PC-9 (cell line): ENCODE measurements at regions of chr3 and their contacts with region 1.

Region 1: DNA sequence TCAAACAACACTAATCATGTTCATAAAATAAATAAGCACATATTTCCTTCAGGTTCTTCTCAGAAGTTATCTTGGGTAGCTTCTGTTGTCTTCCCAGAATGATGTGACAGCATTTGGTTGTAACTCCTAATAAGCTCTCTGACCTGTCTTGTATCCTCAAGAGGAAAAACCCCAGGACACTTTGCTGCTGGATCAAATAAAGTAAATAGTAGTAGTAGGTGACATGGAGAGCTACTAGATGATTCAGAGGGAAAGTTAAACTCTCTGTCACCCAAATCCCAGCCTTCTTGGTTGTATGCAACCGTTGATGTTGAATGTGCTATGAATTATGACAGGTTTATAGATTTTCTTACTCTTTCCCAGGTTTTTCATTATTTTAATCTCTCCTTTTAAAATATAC is 143.0 kb downstream of the ARPP21 start:
- DNase-seq: no peak
- H3K4me3 ChIP-seq: no peak overlapping the region
- H3K27ac ChIP-seq: no peak overlapping the region
- H3K4me1 ChIP-seq: no peaks in the 10 kb centered on the region
- H3K27me3 ChIP-seq: peaks cover 5% of the 10 kb centered on the region; the same call in 1 of the 2 replicates
- CTCF ChIP-seq: no peak

Region 2: GRCh38 chr3:35194666-35195065 is 587.7 kb before region 1 on chr3:
- CTCF ChIA-PET with region 1: no interaction called
- POLR2A ChIA-PET with region 1: no interaction called
- intact Hi-C with region 1: no loop called
- DNase-seq: no peak
- H3K4me3 ChIP-seq: no peak overlapping the region
- H3K27ac ChIP-seq: no peak overlapping the region
- H3K4me1 ChIP-seq: no peaks in the 10 kb centered on the region
- H3K27me3 ChIP-seq: no peaks in the 10 kb centered on the region
- CTCF ChIP-seq: no peak

Region 3: GRCh38 chr3:35505181-35505580 is 277.2 kb before region 1 on chr3:
- CTCF ChIA-PET with region 1: no interaction called
- POLR2A ChIA-PET with region 1: no interaction called
- intact Hi-C with region 1: no loop called
- DNase-seq: no peak
- H3K4me3 ChIP-seq: no peak overlapping the region
- H3K27ac ChIP-seq: no peak overlapping the region
- H3K4me1 ChIP-seq: no peaks in the 10 kb centered on the region
- H3K27me3 ChIP-seq: no peaks in the 10 kb centered on the region
- CTCF ChIP-seq: no peak

Region 4: GRCh38 chr3:35680866-35681650 is 101.3 kb before region 1 on chr3:
- CTCF ChIA-PET with region 1: no interaction called
- POLR2A ChIA-PET with region 1: no interaction called
- intact Hi-C with region 1: no loop called
- DNase-seq: no peak
- H3K4me3 ChIP-seq: no peak overlapping the region
- H3K27ac ChIP-seq: no peak overlapping the region
- H3K4me1 ChIP-seq: no peaks in the 10 kb centered on the region
- H3K27me3 ChIP-seq: peaks cover 35% of the 10 kb centered on the region
- CTCF ChIP-seq: no peak

Region 5: DNA sequence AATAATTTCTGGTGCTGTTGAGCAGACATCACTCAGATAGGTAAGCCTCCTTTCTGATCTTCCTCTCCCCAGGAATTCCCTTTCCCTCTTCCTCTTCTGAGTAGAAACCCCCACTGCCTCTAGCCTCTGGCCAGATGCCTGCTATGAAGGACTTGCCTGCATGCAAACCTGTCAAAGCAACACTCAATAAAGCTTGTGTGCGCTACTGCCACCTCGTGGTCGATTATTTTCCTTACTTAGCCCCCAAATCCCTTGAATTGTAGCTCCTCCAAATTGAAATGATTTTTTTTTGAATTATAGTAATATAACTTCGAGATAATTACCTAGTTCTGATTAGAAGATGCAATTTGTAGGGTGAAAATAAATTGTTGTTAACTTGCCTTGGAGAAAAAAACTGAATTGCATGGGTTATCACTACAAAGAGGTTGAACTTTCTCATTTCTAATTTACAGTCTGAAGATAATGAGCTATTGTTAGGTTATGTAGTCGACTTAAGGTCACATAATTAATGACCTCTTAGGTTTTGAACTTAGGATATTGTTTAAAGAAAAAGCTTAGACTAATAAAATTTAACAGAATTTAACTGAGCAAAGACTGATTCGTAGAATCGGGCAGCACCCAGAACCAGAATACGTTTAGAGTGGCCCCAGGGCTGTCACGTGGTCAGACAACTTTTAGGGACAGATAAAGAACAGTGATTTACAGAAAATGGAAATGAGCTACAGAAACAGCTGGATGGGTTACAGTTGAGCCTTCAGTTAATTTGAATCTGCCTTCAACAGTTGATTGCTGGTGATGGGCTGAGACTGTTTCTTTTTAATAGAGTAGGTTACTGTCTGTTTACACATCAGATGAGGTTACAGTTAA is 126.2 kb after region 1 on chr3:
- CTCF ChIA-PET with region 1: interaction called, 11 read pairs
- POLR2A ChIA-PET with region 1: no interaction called
- intact Hi-C with region 1: no loop called
- DNase-seq: peak in 1 of 2 experiments; percentile 29
- H3K4me3 ChIP-seq: no peak overlapping the region
- H3K27ac ChIP-seq: no peak overlapping the region
- H3K4me1 ChIP-seq: no peaks in the 10 kb centered on the region
- H3K27me3 ChIP-seq: no peaks in the 10 kb centered on the region
- CTCF ChIP-seq: peak; percentile 80